ENCODE measurements at regions of chr17 and their contacts with region 1.

Region 1: GRCh38 chr17:32479074-32479617 is 7.6 kb upstream of the CDK5R1 start:
- DNase-seq: no peak
- ATAC-seq: peak; percentile 71 to 79 (median 74)
- H3K4me3 ChIP-seq: no peak overlapping the region
- H3K27ac ChIP-seq: peak overlapping the region; percentile 19
- H3K4me1 ChIP-seq: peaks cover 11% of the 10 kb centered on the region
- H3K27me3 ChIP-seq: no peaks in the 10 kb centered on the region
- CTCF ChIP-seq: no peak

Region 2: DNA sequence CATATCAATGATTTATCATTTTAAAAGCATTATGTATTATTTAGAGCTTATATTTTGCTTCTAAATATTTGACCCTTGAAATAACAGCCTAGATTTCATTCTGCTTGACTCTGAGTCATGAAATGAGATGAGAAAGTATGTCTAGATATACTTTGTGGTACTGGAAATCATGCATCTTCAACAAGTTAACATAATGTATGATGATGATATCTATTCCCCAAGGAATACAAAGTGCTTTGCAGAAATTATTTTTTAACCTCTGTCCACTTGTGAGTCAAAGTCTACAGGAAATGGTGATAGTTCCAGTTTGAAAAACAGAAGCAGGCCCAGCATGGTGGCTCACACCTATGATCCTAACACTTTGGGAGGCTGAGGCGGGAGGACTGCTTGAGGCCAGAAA is 1965.8 kb before region 1 on chr17:
- intact Hi-C with region 1: loop called in 1 of 2 experiments (anchors 5 kb)
- DNase-seq: no peak
- ATAC-seq: no peak
- H3K4me3 ChIP-seq: no peak overlapping the region
- H3K27ac ChIP-seq: no peak overlapping the region
- H3K4me1 ChIP-seq: no peaks in the 10 kb centered on the region
- H3K27me3 ChIP-seq: no peaks in the 10 kb centered on the region
- CTCF ChIP-seq: no peak

Region 3: GRCh38 chr17:32152130-32152529 is 327.0 kb before region 1 on chr17:
- intact Hi-C with region 1: no loop called
- DNase-seq: no peak
- ATAC-seq: peak in 3 of 4 donors; percentile 32 to 85 (median 72)
- H3K4me3 ChIP-seq: no peak overlapping the region
- H3K27ac ChIP-seq: peak overlapping the region; percentile 36
- H3K4me1 ChIP-seq: peaks cover 33% of the 10 kb centered on the region
- H3K27me3 ChIP-seq: no peaks in the 10 kb centered on the region
- CTCF ChIP-seq: no peak